Esophagus squamous epithelium (tissue), 5 donors: ENCODE measurements at regions of chr12 and their contacts with region 1.

Region 1: GRCh38 chr12:52167954-52168717 is 23.7 kb downstream of the KRT80 start:
- DNase-seq: no peak
- H3K4me3 ChIP-seq: no peak overlapping the region
- H3K27ac ChIP-seq: peak overlapping the region in 2 of 4 donors; percentile 32 to 40
- H3K4me1 ChIP-seq: peaks cover 15 to 57% (median 20%) of the 10 kb centered on the region in 3 donors
- H3K27me3 ChIP-seq: no peaks in the 10 kb centered on the region
- CTCF ChIP-seq: no peak
- POLR2A ChIP-seq: no peak

Region 2: GRCh38 chr12:51083126-51083833 is 1084.9 kb before region 1 on chr12 and contains the start of gene CSRNP2:
- intact Hi-C with region 1: no loop called
- DNase-seq: peak; percentile 91
- H3K4me3 ChIP-seq: peak within 1 kb of the TSS; percentile 81 to 97 (median 90)
- H3K27ac ChIP-seq: peak within 1 kb of the TSS; percentile 90 to 96 (median 94)
- H3K4me1 ChIP-seq: peaks cover 0 to 25% (median 7%) of the 10 kb centered on the region in 3 donors
- H3K27me3 ChIP-seq: no peaks in the 10 kb centered on the region
- CTCF ChIP-seq: peak in 3 of 6 experiments; percentile 5 to 33 (median 24)
- POLR2A ChIP-seq: peak in 3 of 4 donors; percentile 97 to 100 (median 99)
- total RNA-seq, gene CSRNP2: 7.4 to 14.7 (median 10.4) TPM

Region 3: DNA sequence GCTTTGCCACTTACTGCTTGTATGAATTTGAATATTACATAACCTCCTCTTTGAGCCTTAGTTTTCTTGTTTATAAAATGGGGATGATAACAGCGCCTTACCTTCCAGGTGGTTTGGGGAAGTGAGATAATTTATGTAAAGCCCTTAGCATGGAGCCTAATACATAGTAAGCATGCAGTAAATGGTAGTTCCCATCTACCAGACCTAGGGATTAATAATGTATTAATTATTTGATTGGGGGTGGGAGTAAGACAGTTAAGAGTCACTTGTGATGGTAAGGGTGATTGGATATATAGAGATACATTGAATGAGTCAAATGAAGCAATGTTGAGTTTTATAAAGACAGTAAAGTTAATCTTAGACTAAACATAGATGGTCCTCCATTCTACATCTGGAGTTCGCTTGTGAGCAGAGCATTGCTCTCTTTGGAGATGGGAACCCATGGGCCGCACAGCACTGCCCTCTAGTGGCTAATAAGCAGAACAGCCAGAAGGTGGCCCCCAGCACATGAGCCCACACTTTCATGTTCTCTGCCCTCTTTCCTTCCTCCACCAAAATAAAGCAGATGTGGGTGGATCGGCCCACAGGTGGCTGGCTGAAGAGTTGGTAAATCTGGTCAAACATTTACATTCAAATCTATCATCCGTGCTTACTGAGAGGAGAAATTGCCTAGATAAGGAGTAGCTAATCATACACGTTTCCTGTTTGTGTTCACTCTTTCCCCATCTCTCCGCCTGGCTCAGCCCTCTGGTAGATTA is 187.9 kb before region 1 on chr12:
- intact Hi-C with region 1: no loop called
- DNase-seq: no peak
- H3K4me3 ChIP-seq: no peak overlapping the region
- H3K27ac ChIP-seq: no peak overlapping the region
- H3K4me1 ChIP-seq: peaks cover 0 to 16% (median 0%) of the 10 kb centered on the region in 3 donors
- H3K27me3 ChIP-seq: no peaks in the 10 kb centered on the region
- CTCF ChIP-seq: peak; percentile 88 to 97 (median 96)
- POLR2A ChIP-seq: no peak

Region 4: GRCh38 chr12:52278541-52279421 is 110.6 kb after region 1 on chr12:
- intact Hi-C with region 1: loop called (anchors 5 kb)
- DNase-seq: no peak
- H3K4me3 ChIP-seq: peak overlapping the region in 3 of 4 donors; percentile 25 to 48 (median 27)
- H3K27ac ChIP-seq: peak overlapping the region; percentile 60 to 87 (median 83)
- H3K4me1 ChIP-seq: peaks cover 13 to 34% (median 29%) of the 10 kb centered on the region in 3 donors
- H3K27me3 ChIP-seq: peaks cover 0 to 21% (median 0%) of the 10 kb centered on the region in 4 donors
- CTCF ChIP-seq: peak; percentile 85 to 97 (median 96)
- POLR2A ChIP-seq: no peak